Calu3 (cell line): ENCODE measurements at regions of chr9 and their contacts with region 1.

Region 1: DNA sequence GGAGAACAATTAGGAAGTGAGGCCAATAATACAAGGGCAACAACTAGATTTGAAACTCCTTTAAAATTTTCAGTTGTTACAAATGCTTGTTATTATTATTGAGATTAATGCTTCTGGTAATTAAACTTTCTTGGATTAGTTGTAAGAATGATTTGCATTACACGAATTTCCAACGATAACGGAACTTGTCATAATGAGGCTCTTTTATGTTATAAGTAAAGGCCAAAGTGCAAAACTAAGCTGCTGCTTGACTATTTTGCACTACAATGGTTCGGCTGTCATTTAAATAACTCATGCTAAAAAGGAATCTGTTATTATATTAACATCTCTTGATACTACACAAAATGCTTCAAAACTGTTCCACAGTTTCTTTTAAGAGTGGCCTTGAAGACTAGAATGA is 1007.1 kb downstream of the PTPRD start:
- DNase-seq: no peak
- H3K4me3 Mint-ChIP-seq: no peak overlapping the region
- H3K27ac Mint-ChIP-seq: no peak overlapping the region
- H3K4me1 Mint-ChIP-seq: no peaks in the 10 kb centered on the region
- H3K27me3 Mint-ChIP-seq: no peaks in the 10 kb centered on the region
- CTCF ChIP-seq: no peak

Region 2: GRCh38 chr9:9790216-9790872 is 184.7 kb after region 1 on chr9:
- CTCF ChIA-PET with region 1: interaction called, 14 read pairs
- intact Hi-C with region 1: loop called (anchors 1 kb)
- DNase-seq: peak; percentile 56
- H3K4me3 Mint-ChIP-seq: no peak overlapping the region
- H3K27ac Mint-ChIP-seq: no peak overlapping the region
- H3K4me1 Mint-ChIP-seq: no peaks in the 10 kb centered on the region
- H3K27me3 Mint-ChIP-seq: no peaks in the 10 kb centered on the region
- CTCF ChIP-seq: peak; percentile 20

Region 3: GRCh38 chr9:9912459-9912858 is 306.8 kb after region 1 on chr9:
- CTCF ChIA-PET with region 1: interaction called, 9 read pairs
- intact Hi-C with region 1: loop called (anchors 1 kb)
- DNase-seq: no peak
- H3K4me3 Mint-ChIP-seq: no peak overlapping the region
- H3K27ac Mint-ChIP-seq: no peak overlapping the region
- H3K4me1 Mint-ChIP-seq: no peaks in the 10 kb centered on the region
- H3K27me3 Mint-ChIP-seq: no peaks in the 10 kb centered on the region
- CTCF ChIP-seq: peak; percentile 12

Region 4: DNA sequence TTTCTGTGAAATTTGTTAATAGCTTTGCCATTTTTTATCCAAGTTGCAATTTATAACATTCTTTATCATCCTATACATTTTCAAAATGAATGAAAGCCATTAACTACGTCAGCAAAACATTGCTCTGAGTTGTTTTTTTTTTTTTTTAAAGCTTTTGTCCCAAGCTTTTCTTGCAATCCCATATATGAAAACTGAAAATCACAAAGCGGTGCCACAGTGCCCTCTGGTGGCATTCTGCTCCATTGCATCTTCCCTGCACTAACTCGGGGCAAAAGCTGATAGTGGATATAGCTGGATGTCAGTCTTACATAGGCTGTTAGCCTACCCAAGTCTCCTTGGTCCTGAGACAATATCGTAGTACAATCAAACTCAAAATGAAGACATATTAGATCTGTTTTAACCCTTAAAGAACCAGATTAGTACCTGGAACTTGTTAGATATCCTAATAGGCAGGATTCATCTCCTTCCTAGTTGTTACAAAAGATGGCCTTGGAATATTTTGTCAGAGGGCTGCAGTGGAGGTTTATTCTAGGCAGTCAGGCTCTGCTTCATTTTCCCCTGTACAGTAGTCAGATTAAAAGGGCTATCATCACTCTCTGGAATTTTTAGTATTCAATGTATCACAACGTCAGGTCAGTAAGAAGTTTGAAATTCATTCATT is 337.2 kb after region 1 on chr9:
- CTCF ChIA-PET with region 1: interaction called, 14 read pairs
- intact Hi-C with region 1: loop called (anchors 2 kb)
- DNase-seq: peak; percentile 68
- H3K4me3 Mint-ChIP-seq: no peak overlapping the region
- H3K27ac Mint-ChIP-seq: no peak overlapping the region
- H3K4me1 Mint-ChIP-seq: no peaks in the 10 kb centered on the region
- H3K27me3 Mint-ChIP-seq: no peaks in the 10 kb centered on the region
- CTCF ChIP-seq: peak; percentile 65